ENCODE measurements at regions of chr15 and their contacts with region 1.

Region 1: DNA sequence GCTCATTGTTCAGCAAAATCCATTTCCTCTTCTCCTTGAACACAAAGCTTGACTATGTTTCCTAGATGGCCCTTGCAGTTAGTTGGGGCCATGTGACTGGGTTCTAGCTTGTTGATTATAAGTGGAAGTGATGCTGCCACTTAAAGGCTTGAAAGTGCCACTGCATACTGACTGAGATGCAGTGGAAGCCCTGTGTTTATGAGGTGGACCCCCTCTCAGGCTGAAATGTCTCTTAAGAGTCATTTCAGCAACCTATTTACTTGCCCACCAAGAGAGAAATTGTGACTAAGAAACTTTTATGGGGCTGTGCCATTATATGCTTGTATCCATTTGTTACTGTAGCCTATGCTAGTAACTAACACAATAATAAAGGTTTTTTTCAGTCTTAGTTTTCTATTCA is 8.4 kb upstream of the ANP32A start:
- DNase-seq: peak in 3 of 10 donors; percentile 21 to 54 (median 28)

Region 2: GRCh38 chr15:68550481-68551295 is 278.4 kb before region 1 on chr15:
- intact Hi-C with region 1: loop called (anchors 5 kb)
- DNase-seq: peak; percentile 59 to 96 (median 88)

Region 3: GRCh38 chr15:68650901-68651709 is 178.0 kb before region 1 on chr15:
- intact Hi-C with region 1: no loop called
- DNase-seq: peak in 3 of 10 donors; percentile 74 to 93 (median 77)